Esophagus muscularis mucosa (tissue), 4 donors: ENCODE measurements at regions of chr10 and their contacts with region 1.

Region 1: DNA sequence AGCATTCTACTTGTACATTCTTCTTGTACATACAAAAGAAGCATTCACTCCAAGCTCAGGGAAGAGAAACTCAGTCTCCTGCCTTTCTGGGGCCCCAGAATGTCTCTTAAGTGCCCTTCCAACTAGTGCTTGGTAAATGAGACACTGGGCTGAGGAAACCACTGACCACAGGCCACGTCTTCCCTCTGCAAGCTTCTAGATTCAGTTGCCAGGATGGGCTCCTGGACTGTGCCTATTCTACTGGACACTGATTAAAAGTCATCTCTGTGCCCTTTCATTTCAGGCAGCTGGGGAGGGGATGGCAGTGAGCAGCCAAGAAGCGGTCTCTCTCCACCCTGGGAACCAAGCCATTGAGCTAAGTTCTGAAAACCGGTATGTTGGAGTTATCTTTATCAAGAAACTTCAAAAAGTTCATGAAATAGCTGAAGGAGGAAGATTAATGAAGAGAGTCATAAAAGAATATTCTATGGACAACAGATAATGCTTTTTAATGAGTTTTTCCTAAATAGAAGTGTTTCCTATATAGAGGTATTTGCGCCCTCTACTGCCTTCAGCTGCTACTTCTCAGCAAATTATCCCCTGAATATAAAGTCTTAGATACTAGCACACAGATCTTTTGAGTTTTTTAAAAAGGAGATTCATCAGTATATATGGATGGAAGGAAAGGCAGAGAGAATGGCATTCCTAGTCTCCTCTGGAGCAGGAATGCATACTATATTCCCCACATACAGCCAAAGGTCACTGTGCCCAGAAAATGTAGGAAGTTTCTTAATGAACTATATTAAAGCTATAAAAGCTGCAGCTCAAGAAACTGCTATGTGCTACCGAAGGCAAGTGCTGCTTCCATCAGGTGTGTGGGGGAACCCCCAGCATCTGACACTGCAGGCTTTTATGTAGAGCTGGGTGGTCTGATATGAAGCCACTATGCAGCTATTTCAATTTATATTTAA is 8.4 kb upstream of the IFIT1B start:
- DNase-seq: no peak
- H3K4me3 ChIP-seq: no peak overlapping the region
- H3K27ac ChIP-seq: peak overlapping the region in 1 of 4 donors; percentile 0
- H3K4me1 ChIP-seq: peaks cover 25 to 43% (median 40%) of the 10 kb centered on the region in 4 donors
- H3K27me3 ChIP-seq: no peaks in the 10 kb centered on the region
- CTCF ChIP-seq: peak; percentile 29 to 48 (median 46)
- EP300 ChIP-seq: no peak
- POLR2A ChIP-seq: no peak

Region 2: DNA sequence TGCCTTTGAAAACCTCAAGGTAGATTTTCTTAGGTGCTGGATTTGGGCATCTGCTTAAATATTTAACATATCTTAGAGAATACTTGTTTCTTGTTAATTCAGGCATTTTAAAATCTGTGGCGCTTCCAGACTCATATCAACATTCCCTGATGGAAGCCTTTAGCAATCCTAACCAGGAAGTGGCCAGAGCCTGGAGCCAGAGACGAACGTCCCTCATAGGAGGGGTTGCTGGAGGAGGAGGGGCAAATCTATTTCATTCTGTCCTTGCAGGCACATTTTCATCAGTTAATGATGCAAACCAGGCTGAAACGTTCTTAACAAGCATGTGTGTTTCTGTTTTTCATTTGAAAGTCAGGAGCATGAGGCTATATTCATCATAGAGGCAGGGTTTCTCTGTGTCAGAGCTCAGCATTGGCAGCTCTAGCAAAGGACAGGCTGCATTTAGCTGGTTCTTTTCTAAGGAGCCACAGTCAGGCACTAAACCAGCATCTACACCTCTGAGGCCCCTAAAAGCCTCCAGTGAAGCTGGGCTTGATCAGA is 85.4 kb before region 1 on chr10:
- intact Hi-C with region 1: no loop called
- DNase-seq: no peak
- H3K4me3 ChIP-seq: peak overlapping the region; percentile 27 to 42 (median 34)
- H3K27ac ChIP-seq: peak overlapping the region; percentile 79 to 86 (median 81)
- H3K4me1 ChIP-seq: peaks cover 31 to 36% (median 33%) of the 10 kb centered on the region in 4 donors
- H3K27me3 ChIP-seq: no peaks in the 10 kb centered on the region
- CTCF ChIP-seq: no peak
- EP300 ChIP-seq: no peak
- POLR2A ChIP-seq: no peak

Region 3: DNA sequence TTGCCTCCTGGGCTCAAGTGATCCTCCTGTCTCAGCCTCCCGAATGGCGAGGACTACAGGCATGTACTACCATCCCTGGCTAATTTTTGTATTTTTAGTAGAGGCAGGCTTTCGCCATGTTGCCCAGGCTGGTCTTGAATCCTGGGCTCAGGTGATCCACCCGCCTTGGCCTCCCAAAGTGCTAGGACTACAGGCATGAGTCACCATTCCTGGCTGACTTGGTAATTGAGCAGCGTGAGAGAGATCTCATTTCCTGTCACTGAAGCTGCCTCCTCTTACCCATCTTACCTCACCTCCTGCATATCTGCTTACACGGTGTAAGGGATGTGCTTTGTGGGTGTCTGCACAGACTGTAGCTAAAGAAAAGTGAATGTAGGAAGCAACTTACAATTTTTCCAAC is 31.9 kb before region 1 on chr10:
- intact Hi-C with region 1: loop called (anchors 5 kb)
- DNase-seq: no peak
- H3K4me3 ChIP-seq: no peak overlapping the region
- H3K27ac ChIP-seq: no peak overlapping the region
- H3K4me1 ChIP-seq: peaks cover 21 to 36% (median 35%) of the 10 kb centered on the region in 4 donors
- H3K27me3 ChIP-seq: no peaks in the 10 kb centered on the region
- CTCF ChIP-seq: no peak
- EP300 ChIP-seq: no peak
- POLR2A ChIP-seq: no peak